Activated CD4-positive, alpha-beta T cell treated with anti-CD3 and anti-CD28 coated beads for 36 hours (primary cell): ENCODE measurements at regions of chr5 and their contacts with region 1.

Region 1: DNA sequence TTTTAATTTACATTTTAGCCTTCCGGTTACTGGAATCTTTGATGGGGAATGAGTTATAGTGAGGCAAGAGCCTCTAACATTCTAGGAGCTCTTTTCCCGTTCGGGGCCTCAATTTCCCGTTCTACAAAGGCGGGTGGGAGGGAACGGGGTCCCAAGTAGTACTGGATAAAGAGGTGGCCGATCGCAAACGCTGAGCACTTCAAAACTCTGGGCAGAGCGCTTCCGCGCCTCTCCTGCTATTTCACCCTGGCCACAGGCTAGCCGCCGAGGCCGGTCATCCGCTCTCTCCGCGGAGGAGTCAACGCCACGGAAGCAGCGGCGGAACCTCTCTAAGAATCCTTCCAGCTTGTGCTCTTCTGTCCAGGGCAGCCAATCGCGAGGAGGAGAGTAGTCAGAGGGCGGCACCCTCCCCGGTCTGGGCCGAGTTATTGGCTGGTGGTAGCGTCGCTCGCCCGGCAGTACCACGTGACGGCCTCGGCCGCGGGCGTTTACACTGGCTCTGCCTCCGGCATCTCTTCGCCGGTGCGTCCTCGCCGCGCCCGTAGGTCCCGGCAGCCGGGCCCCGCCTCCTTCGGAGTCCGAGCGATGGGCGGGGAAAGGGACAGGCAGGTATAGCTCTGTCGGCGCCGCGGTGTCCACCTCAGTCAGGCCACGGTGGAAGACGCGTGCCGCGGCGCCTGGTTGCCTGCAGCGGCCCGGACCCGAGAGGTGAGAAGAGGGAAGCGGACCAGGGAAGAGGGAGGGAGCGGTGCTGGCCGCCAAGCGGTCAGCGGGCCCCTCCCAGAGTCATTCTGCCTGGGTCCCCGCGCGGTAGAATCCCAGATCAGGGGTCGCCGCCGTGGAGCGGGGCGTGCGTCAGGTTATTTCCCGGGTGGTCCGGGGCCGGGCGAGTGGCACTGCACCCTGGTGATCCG is at the start of gene SLC26A2:
- DNase-seq: peak; percentile 97
- ATAC-seq: peak; percentile 97
- H3K4me3 Mint-ChIP-seq: peak within 1 kb of the TSS; percentile 92
- H3K27ac Mint-ChIP-seq: peak within 1 kb of the TSS; percentile 100
- H3K4me1 Mint-ChIP-seq: peaks cover 32% of the 10 kb centered on the region
- H3K27me3 Mint-ChIP-seq: no peaks in the 10 kb centered on the region
- total RNA-seq, gene SLC26A2: 3.9 to 5.3 TPM

Region 2: DNA sequence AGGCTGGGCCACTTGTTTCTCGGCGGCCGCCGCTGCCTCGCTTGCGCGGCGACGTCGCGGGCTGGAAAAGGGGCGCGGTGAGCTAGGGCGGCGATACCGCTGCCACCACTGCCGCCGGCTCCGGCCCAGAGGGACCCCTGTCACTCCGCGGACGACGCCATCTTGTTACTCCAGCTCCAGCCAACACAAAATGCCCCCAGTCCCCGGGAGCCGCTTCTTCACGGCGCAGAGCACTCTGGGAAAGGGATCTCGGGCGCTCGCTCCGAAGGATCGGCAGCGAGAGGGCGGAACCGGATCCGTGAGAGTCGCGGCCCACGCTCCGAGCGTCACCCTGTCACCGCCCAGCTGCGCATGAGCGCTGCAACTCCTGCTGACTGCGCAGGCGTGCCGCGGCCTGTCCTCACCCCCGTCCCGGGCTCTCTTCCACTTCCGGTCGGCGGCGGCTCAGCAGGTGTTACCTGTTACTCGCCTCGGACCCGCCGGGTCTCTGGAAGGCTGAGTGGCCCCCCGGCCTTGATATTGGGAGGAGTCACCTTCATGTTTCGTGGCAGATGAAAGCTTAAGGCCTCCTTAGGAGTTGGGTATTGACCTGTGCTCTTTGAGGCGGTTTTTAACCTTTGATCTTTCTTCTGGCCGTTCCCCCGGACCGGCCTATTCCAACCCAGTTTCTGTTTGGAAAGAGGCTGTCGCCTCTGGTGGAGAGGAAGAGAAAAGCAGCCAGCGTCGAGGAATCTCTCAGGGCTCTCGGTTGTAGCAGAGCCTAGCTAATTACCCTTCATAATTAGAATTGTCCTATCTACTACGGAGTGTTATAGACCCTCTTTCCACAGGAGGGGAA is 409.1 kb before region 1 on chr5 and contains the start of gene CSNK1A1:
- CTCF ChIA-PET with region 1: interaction called, 3 read pairs
- POLR2A ChIA-PET with region 1: no interaction called
- intact Hi-C with region 1: loop called in 1 of 2 experiments (anchors 1 kb)
- DNase-seq: peak; percentile 100
- ATAC-seq: peak; percentile 90
- H3K4me3 Mint-ChIP-seq: peak within 1 kb of the TSS; percentile 95
- H3K27ac Mint-ChIP-seq: peak within 1 kb of the TSS; percentile 100
- H3K4me1 Mint-ChIP-seq: peaks cover 27% of the 10 kb centered on the region
- H3K27me3 Mint-ChIP-seq: no peaks in the 10 kb centered on the region
- total RNA-seq, gene CSNK1A1: 169 to 203 TPM

Region 3: DNA sequence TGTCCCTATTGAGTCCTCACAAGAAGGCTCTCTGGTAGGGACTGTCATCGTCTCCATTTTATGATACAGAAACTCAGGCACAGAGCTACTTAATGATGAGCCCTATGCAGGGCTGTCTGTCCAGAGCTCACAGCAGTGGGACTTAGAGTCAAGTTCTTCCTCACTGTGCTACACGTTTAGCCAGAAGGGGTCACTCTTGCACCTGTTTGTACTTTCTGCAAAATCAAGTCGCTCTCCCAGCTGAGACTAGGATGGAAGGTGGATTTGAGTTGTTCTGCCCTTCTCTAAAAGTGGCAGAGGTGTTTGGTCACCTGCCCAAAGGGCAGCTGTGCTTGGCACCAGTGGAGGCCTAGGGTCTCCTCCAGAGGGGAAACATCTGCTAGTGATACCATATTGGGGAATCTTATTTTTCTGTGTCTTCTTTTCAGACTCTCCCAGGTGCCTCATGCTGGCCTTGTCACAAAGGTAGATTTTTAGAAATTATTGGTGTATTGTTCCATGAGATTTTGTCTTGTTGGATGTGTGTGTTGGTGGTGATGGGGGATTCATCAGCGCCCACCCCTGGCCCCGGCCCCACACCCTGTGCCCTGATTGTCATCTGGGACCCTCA is 126.2 kb before region 1 on chr5:
- CTCF ChIA-PET with region 1: interaction called, 68 read pairs
- POLR2A ChIA-PET with region 1: no interaction called
- intact Hi-C with region 1: loop called (anchors 1 kb)
- DNase-seq: peak; percentile 74
- ATAC-seq: peak; percentile 55
- H3K4me3 Mint-ChIP-seq: no peak overlapping the region
- H3K27ac Mint-ChIP-seq: no peak overlapping the region
- H3K4me1 Mint-ChIP-seq: peaks cover 5% of the 10 kb centered on the region
- H3K27me3 Mint-ChIP-seq: no peaks in the 10 kb centered on the region

Region 4: DNA sequence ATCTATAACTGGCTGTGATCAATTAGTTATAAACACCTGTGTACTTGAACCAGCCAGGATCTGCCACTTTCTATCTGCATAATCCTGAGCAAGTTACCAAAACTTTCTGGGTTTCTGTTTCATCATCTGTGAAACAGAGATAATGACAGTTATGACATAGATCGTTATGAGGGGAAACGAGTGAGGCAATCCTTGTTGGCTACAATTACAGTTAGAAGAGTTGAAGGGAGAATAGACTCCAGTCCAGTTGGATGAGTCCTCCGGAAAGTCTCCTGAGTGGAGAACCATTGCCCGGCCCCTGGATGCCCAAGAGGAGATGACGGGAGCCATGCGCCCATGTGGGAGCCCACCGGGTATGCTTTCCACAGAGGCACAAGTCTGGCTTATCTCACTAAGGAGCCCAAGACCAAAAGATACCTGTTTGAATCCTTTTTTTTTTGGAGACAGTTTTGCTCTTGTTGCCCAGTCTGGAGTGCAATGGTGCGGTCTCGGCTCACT is 20.4 kb before region 1 on chr5:
- CTCF ChIA-PET with region 1: interaction called, 6 read pairs
- POLR2A ChIA-PET with region 1: no interaction called
- intact Hi-C with region 1: loop called in 1 of 2 experiments (anchors 1 kb)
- DNase-seq: no peak
- ATAC-seq: peak; percentile 85
- H3K4me3 Mint-ChIP-seq: no peak overlapping the region
- H3K27ac Mint-ChIP-seq: peak overlapping the region; percentile 45
- H3K4me1 Mint-ChIP-seq: peaks cover 7% of the 10 kb centered on the region
- H3K27me3 Mint-ChIP-seq: peaks cover 5% of the 10 kb centered on the region

Region 5: GRCh38 chr5:150000256-150000989 is 39.9 kb after region 1 on chr5 and contains the starts of genes HMGXB3 and TIGD6:
- CTCF ChIA-PET with region 1: interaction called, 9 read pairs
- POLR2A ChIA-PET with region 1: interaction called, 3 read pairs
- intact Hi-C with region 1: loop called (anchors 1 kb)
- DNase-seq: peak; percentile 93
- ATAC-seq: peak; percentile 80
- H3K4me3 Mint-ChIP-seq: peak within 1 kb of the TSS; percentile 86
- H3K27ac Mint-ChIP-seq: peak within 1 kb of the TSS; percentile 94
- H3K4me1 Mint-ChIP-seq: peaks cover 37% of the 10 kb centered on the region
- H3K27me3 Mint-ChIP-seq: no peaks in the 10 kb centered on the region
- total RNA-seq, gene HMGXB3: 27.2 to 30.5 TPM
- total RNA-seq, gene TIGD6: 2.5 to 2.6 TPM

Region 6: GRCh38 chr5:150409638-150410523 is 449.4 kb after region 1 on chr5:
- CTCF ChIA-PET with region 1: no interaction called
- POLR2A ChIA-PET with region 1: no interaction called
- intact Hi-C with region 1: loop called in 1 of 2 experiments (anchors 2 kb)
- DNase-seq: peak; percentile 66
- ATAC-seq: peak; percentile 40
- H3K4me3 Mint-ChIP-seq: peak overlapping the region; percentile 99
- H3K27ac Mint-ChIP-seq: peak overlapping the region; percentile 99
- H3K4me1 Mint-ChIP-seq: peaks cover 36% of the 10 kb centered on the region
- H3K27me3 Mint-ChIP-seq: no peaks in the 10 kb centered on the region

Region 7: DNA sequence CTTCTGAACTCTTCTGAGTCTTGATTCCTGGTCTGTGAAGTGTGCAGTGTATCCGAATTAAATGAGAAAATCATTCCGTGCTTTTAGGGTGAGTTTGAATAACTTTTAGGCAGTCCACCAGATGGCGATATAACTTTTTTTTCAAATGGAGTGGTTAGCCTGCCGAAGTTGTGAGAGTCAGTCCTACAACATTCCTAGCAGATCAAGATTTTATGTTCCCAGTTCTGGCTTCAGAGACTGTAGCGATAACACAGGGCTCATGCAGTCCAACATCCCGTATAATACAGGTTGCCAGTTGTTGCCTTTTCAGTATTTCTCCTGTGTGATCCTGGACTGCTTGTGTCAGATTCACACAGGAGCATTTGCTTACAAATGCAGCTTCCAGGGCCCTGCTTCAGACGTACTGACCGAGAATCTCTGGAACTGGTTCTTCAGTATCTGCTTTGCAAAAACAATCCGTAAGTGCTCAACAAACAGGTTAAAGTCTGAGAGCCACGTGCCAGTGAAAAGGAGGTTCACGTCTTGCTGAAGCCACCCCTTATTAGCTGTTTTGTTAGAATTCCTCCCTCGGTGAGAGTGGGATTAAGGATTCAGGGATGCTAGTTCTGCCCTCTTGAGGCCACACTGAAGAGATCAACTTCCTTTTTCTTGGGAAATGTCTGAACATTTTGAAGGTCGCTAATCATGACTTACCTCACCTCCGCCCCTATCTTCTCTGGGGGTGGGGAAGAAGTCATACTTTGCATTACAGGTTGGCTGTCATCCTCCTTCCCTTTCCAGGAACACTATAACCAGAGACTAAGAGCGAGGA is 840.8 kb after region 1 on chr5:
- CTCF ChIA-PET with region 1: no interaction called
- POLR2A ChIA-PET with region 1: no interaction called
- intact Hi-C with region 1: no loop called
- DNase-seq: peak; percentile 26
- ATAC-seq: peak; percentile 78
- H3K4me3 Mint-ChIP-seq: no peak overlapping the region
- H3K27ac Mint-ChIP-seq: no peak overlapping the region
- H3K4me1 Mint-ChIP-seq: peaks cover 22% of the 10 kb centered on the region
- H3K27me3 Mint-ChIP-seq: no peaks in the 10 kb centered on the region